ENCODE measurements at regions of chr14 and their contacts with region 1.

Region 1: GRCh38 chr14:35988550-35988949 is 162.4 kb downstream of the BRMS1L start:
- DNase-seq: no peak
- ATAC-seq: no peak
- H3K4me3 ChIP-seq: no peak overlapping the region
- H3K27ac ChIP-seq: no peak overlapping the region
- H3K4me1 ChIP-seq: no peaks in the 10 kb centered on the region
- H3K27me3 ChIP-seq: no peaks in the 10 kb centered on the region
- CTCF ChIP-seq: no peak

Region 2: DNA sequence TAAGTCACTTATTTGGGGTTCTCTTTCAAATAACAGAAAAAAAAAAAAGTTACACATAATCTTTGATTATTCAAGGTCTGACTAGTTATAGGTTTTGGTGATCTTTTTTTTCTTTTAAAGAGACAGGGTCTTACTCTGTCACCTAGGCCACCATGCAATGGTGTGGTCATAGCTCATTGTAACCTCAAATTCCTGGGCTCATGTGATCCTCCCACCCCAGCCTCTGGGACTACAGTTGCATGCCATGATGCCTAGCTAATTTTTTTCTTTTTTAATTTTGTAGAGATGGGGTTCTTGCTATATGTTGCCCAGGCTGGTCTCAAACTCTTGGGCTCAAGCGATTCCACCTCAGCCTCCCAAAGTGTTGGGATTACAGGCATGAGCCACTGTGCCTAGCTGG is 1217.6 kb before region 1 on chr14:
- CTCF ChIA-PET with region 1: no interaction called
- POLR2A ChIA-PET with region 1: no interaction called
- in situ Hi-C with region 1: no loop called
- intact Hi-C with region 1: no loop called
- DNase-seq: no peak
- ATAC-seq: no peak
- H3K4me3 ChIP-seq: no peak overlapping the region
- H3K27ac ChIP-seq: no peak overlapping the region
- H3K4me1 ChIP-seq: no peaks in the 10 kb centered on the region
- H3K27me3 ChIP-seq: no peaks in the 10 kb centered on the region
- CTCF ChIP-seq: no peak

Region 3: DNA sequence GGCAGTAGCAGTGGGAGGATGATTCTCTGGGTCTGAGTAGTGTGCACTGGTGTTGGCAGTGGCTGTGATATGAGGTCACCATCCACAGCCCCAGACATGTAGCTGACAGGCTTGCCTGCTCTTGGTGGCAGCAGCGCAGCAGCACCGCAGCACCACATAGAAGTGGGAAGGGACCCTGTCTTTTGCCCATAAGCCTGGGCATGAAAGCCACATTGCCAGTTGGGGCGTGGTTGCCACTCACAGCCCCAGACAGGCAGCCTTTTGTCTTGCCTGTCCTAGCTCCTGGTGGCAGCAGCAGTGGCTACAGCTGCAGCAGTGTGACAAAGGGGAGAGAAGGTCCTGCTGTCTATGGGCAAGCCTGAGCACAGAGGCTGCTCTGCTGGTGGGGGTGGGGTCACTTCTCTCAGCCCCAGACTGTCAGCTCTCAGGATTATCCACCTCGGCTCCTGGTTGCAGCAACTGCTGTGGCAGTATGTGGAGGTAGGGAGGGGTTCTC is 90.9 kb before region 1 on chr14:
- CTCF ChIA-PET with region 1: no interaction called
- POLR2A ChIA-PET with region 1: no interaction called
- in situ Hi-C with region 1: no loop called
- intact Hi-C with region 1: no loop called
- DNase-seq: no peak
- ATAC-seq: no peak
- H3K4me3 ChIP-seq: no peak overlapping the region
- H3K27ac ChIP-seq: no peak overlapping the region
- H3K4me1 ChIP-seq: no peaks in the 10 kb centered on the region
- H3K27me3 ChIP-seq: peaks cover 2% of the 10 kb centered on the region; the same call in 1 of the 2 replicates
- CTCF ChIP-seq: no peak

Region 4: DNA sequence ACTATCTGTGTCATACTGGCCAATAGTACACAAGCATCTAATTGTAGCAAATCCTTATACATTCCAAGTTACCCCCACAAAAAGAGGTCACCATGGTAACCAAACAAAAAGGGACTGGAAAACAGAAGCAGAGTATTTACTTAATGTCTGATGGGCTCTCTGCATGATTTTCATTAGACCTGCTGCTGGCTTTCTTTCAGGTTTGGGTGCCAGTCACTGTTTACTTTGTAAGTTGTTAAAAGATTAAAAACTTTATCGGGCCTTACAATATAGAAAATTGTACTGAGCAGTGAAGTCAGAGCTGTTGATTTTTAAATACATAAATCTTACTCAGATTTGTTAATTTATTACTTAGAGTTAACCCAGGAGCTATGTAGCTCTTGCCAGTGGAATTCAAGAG is 38.6 kb before region 1 on chr14:
- CTCF ChIA-PET with region 1: interaction called, 11 read pairs
- POLR2A ChIA-PET with region 1: no interaction called
- in situ Hi-C with region 1: no loop called
- intact Hi-C with region 1: no loop called
- DNase-seq: no peak
- ATAC-seq: no peak
- H3K4me3 ChIP-seq: no peak overlapping the region
- H3K27ac ChIP-seq: no peak overlapping the region
- H3K4me1 ChIP-seq: no peaks in the 10 kb centered on the region
- H3K27me3 ChIP-seq: peaks cover 3% of the 10 kb centered on the region; the same call in 1 of the 2 replicates
- CTCF ChIP-seq: no peak

Region 5: DNA sequence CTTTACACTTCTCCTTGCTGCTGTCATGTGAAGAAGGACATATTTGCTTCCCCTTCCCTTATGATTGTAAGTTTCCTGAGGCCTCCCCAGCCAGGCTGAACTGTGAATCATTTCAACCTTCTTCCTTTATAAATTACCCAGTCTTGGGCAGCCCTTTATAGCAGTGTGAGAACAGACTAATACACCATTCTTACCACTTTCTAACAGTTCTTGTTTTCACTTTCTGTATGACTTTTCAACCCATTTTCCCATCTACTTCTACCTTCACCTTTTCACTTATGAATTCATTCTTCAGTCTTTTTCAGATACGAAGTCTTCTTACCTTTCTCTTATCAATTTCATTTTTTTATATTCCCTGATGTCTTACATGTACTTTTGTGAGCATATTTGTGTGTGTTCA is 1551.4 kb after region 1 on chr14:
- CTCF ChIA-PET with region 1: no interaction called
- POLR2A ChIA-PET with region 1: no interaction called
- in situ Hi-C with region 1: no loop called
- intact Hi-C with region 1: no loop called
- DNase-seq: no peak
- ATAC-seq: no peak
- H3K4me3 ChIP-seq: no peak overlapping the region
- H3K27ac ChIP-seq: no peak overlapping the region
- H3K4me1 ChIP-seq: no peaks in the 10 kb centered on the region
- H3K27me3 ChIP-seq: no peaks in the 10 kb centered on the region
- CTCF ChIP-seq: no peak

Measured in Panc1 (cell line).